Naive thymus-derived CD4-positive, alpha-beta T cell (primary cell): ENCODE measurements at regions of chr14 and their contacts with region 1.

Region 1: DNA sequence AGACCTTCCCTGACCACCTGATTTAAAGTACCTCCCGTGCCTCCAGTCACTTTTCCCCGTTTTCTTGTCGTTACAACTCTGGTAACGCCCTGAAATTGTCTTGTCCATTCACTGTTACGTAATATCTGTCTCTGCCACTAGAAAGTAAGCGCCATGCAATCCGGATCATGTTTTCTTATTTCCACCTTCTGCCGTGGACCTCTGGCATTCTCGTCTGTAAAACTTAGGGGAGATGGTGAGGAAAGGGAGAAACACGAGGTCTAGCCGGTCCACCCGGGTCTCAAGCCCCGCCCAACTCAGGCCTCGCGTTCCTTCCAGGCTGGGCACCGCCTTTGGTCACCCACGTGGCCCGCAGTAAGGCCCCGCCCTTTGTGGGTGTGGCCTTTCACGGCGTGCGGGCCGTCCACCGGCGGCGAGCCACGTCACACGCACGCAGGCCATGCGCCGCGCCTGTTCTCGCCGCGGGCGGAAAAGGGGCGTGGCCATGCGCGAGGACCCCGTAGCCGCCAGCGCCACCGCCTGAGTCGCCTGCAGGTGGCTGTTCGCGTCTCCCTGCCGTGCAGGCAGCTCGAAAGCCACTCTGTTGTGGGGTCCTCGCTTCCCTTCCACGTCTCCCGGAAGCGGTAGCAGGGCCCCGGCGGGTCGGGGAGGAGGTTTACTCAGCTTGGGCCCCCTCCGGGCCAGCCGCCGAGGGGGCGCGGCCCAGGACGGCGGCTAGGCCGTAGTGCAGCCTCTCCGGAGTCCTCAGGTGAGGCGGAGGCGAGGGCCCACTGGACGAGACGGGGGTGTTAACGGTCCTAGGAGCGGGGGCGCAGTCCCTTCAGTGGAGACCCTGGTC is at the start of gene GOLGA5:
- DNase-seq: peak; percentile 97 to 100 (median 99)
- ATAC-seq: peak; percentile 97
- H3K4me3 ChIP-seq: peak within 1 kb of the TSS; percentile 98
- H3K4me3 Mint-ChIP-seq: peak within 1 kb of the TSS; percentile 78 to 96 (median 92)
- H3K27ac ChIP-seq: peak within 1 kb of the TSS; percentile 91
- H3K27ac Mint-ChIP-seq: peak within 1 kb of the TSS; percentile 78 to 98 (median 95)
- H3K4me1 ChIP-seq: peaks cover 15 to 20% of the 10 kb centered on the region in 2 donors
- H3K4me1 Mint-ChIP-seq: peaks cover 24 to 45% (median 39%) of the 10 kb centered on the region in 7 donors
- H3K27me3 ChIP-seq: no peaks in the 10 kb centered on the region
- H3K27me3 Mint-ChIP-seq: peaks cover 0 to 9% (median 0%) of the 10 kb centered on the region in 5 donors
- total RNA-seq, gene GOLGA5: 9.7 to 25.8 (median 23.5) TPM

Region 2: DNA sequence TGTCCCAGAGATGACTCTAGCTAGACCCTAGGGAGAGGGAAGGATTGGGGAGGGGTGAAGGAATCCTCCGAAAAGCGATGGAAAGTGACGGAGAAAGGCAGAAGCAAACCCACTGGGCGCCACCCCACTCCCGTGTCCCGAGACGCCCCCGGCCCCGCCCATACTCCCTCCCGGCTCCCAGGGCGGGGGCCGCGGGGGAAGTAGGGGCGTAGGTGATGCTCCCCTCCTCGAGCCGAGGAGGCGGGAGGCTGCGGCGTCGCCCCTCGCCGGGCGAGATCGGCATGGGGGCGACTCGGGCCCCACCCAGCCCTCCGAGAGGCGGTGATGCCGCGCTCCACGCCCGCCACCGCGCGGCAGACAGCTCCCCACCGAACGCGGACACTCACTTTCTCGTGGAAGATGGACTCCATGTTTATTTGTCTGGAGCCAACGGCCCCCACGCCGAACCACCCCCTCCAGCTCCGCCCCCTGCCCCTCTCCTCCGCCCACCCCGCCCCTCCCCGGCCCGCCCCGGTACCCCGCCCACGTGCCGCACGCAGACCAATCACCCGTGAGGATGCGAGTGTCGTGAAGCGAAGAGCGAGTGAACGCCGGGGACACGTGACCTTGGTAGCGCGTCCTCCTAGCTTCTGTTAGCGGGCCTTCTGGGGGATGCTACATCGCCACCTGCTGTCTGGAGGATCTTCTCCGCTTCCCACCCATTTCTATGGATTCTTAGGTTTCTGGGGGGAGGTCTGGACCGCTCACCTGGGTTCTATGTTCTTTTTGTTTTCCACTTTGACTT is 687.6 kb before region 1 on chr14 and contains the start of gene ATXN3:
- CTCF ChIA-PET with region 1: no interaction called
- POLR2A ChIA-PET with region 1: no interaction called
- intact Hi-C with region 1: loop called (anchors 1 kb)
- DNase-seq: peak; percentile 75 to 97 (median 93)
- ATAC-seq: peak; percentile 95
- H3K4me3 ChIP-seq: peak within 1 kb of the TSS; percentile 82
- H3K4me3 Mint-ChIP-seq: peak within 1 kb of the TSS; percentile 88 to 100 (median 98)
- H3K27ac ChIP-seq: peak within 1 kb of the TSS; percentile 91
- H3K27ac Mint-ChIP-seq: peak within 1 kb of the TSS; percentile 82 to 96 (median 92)
- H3K4me1 ChIP-seq: peaks cover 5 to 17% of the 10 kb centered on the region in 2 donors
- H3K4me1 Mint-ChIP-seq: peaks cover 39 to 72% (median 61%) of the 10 kb centered on the region in 7 donors
- H3K27me3 ChIP-seq: no peaks in the 10 kb centered on the region
- H3K27me3 Mint-ChIP-seq: no peaks in the 10 kb centered on the region
- total RNA-seq, gene ATXN3: 27.8 to 54.9 (median 36.9) TPM

Region 3: GRCh38 chr14:92121670-92122350 is 672.1 kb before region 1 on chr14 and contains the starts of genes CPSF2 and NDUFB1:
- CTCF ChIA-PET with region 1: interaction called, 3 read pairs
- POLR2A ChIA-PET with region 1: interaction called, 9 read pairs
- intact Hi-C with region 1: loop called (anchors 5 kb)
- DNase-seq: peak; percentile 74 to 87 (median 85)
- ATAC-seq: peak; percentile 92
- H3K4me3 ChIP-seq: peak within 1 kb of the TSS; percentile 78
- H3K4me3 Mint-ChIP-seq: peak within 1 kb of the TSS; percentile 88 to 100 (median 99)
- H3K27ac ChIP-seq: peak within 1 kb of the TSS; percentile 92
- H3K27ac Mint-ChIP-seq: peak within 1 kb of the TSS; percentile 96 to 100 (median 100)
- H3K4me1 ChIP-seq: peaks cover 17 to 19% of the 10 kb centered on the region in 2 donors
- H3K4me1 Mint-ChIP-seq: peaks cover 27 to 72% (median 53%) of the 10 kb centered on the region in 7 donors
- H3K27me3 ChIP-seq: no peaks in the 10 kb centered on the region
- H3K27me3 Mint-ChIP-seq: no peaks in the 10 kb centered on the region
- total RNA-seq, gene CPSF2: 30.2 to 77.4 (median 60.4) TPM
- total RNA-seq, gene NDUFB1: 55.1 to 107 (median 89.7) TPM

Region 4: DNA sequence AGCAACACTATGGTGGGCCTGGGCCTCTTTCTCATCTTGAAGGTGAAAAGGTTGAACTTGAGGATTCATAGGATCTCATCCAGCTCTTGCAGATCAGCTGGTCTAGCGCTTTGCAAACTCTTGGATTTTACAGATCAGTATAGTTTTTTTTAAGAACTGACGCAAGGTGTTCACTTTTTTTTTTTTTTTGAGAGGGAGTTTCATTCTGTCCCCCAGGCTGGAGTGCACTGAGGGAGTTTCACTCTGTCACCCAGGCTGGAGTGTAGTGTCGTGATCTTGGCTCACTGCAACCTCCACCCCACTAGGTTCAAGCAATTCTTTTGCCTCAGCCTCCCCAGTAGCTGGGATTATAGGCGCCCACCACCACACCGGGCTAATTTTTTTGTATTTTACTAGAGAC is 25.1 kb before region 1 on chr14:
- CTCF ChIA-PET with region 1: no interaction called
- POLR2A ChIA-PET with region 1: no interaction called
- intact Hi-C with region 1: no loop called
- DNase-seq: no peak
- ATAC-seq: no peak
- H3K4me3 ChIP-seq: no peak overlapping the region
- H3K4me3 Mint-ChIP-seq: peak overlapping the region in 1 of 10 donors; percentile 32
- H3K27ac ChIP-seq: no peak overlapping the region
- H3K27ac Mint-ChIP-seq: peak overlapping the region in 1 of 9 donors; percentile 69
- H3K4me1 ChIP-seq: no peaks in the 10 kb centered on the region
- H3K4me1 Mint-ChIP-seq: peaks cover 0 to 25% (median 0%) of the 10 kb centered on the region in 7 donors
- H3K27me3 ChIP-seq: no peaks in the 10 kb centered on the region
- H3K27me3 Mint-ChIP-seq: peaks cover 0 to 44% (median 0%) of the 10 kb centered on the region in 5 donors

Region 5: DNA sequence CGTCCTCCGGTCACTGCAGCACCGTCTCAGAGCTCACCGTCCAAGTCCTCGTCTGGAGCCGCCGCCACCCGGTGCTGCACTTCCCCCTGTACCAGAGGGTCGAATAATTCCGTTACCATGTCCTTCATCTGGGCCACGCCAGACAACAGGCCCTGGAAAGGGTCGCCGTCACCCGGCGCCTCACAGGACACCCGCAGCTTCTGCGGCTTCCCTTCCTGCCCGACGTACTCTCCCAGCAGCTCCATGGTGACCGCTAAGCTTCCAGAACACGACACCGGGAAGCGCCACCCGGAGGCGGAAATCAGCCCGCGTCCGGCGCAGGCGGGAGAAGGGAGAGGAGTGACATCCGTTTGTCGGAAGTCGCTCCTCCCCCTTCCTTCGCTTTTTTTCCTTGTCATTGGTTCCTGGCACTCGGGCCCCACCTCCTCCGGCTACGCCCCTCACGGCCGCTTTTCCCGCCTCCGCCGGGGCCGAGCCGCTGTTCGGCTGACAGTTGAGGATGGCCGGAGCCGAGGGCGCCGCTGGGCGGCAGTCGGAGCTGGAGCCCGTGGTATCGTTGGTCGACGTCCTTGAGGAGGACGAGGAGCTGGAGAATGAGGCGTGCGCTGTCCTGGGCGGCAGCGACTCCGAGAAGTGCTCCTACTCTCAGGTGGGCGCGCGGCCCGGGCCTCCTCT is 413.0 kb after region 1 on chr14 and contains the starts of genes GON7 and UBR7:
- CTCF ChIA-PET with region 1: no interaction called
- POLR2A ChIA-PET with region 1: no interaction called
- intact Hi-C with region 1: loop called in 1 of 2 experiments (anchors 1 kb)
- DNase-seq: peak; percentile 66 to 91 (median 83)
- ATAC-seq: peak; percentile 99
- H3K4me3 ChIP-seq: peak within 1 kb of the TSS; percentile 81
- H3K4me3 Mint-ChIP-seq: peak within 1 kb of the TSS; percentile 75 to 99 (median 94)
- H3K27ac ChIP-seq: peak within 1 kb of the TSS; percentile 87
- H3K27ac Mint-ChIP-seq: peak within 1 kb of the TSS; percentile 88 to 97 (median 93)
- H3K4me1 ChIP-seq: peaks cover 13 to 22% of the 10 kb centered on the region in 2 donors
- H3K4me1 Mint-ChIP-seq: peaks cover 22 to 65% (median 50%) of the 10 kb centered on the region in 7 donors
- H3K27me3 ChIP-seq: no peaks in the 10 kb centered on the region
- H3K27me3 Mint-ChIP-seq: no peaks in the 10 kb centered on the region
- total RNA-seq, gene GON7: 3.5 to 17.4 (median 8.3) TPM
- total RNA-seq, gene UBR7: 10.1 to 31.3 (median 13.5) TPM

Region 6: DNA sequence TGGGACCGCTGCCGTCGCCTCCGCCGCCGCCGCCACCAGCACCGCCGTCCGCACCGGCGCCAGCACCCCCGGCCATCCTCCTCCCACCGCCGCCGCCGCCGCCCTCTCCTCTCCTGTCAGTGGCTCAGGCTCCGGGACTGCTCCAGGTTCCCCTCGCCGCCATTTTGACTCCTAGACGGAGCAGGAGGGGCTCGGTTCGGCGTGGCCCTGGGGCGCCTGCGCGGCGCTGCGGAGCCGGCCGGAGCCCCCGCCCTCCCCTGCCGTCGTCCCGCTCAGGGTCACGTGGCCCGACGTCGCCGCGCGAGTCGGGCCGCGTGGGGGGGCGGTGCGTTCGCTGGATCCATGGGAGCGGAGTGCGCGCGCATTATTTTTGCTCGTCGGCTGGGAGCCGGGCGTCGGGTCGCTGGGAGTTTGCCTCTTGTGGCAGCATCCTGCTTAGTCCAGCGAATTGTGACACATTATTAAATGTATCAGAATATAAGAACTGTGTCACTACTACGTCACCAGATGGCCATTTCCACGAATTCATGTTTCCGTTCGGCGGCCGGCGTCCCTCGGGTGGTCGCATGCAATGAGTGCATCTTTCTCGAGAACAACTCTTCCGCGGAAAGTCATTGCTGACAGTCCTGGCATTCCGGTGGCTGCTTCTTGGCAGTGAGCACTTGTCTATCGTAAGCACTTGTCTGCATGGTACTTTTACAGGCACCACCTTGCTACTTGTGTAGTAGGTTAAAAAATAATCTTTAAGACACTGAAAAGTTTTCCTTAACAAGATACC is 539.1 kb after region 1 on chr14 and contains the start of gene BTBD7:
- CTCF ChIA-PET with region 1: no interaction called
- POLR2A ChIA-PET with region 1: no interaction called
- intact Hi-C with region 1: loop called (anchors 2 to 5 kb)
- DNase-seq: peak; percentile 91 to 95 (median 93)
- ATAC-seq: peak; percentile 96
- H3K4me3 ChIP-seq: peak within 1 kb of the TSS; percentile 86
- H3K4me3 Mint-ChIP-seq: peak within 1 kb of the TSS; percentile 90 to 96 (median 92)
- H3K27ac ChIP-seq: peak within 1 kb of the TSS; percentile 90
- H3K27ac Mint-ChIP-seq: peak within 1 kb of the TSS; percentile 87 to 98 (median 93)
- H3K4me1 ChIP-seq: peaks cover 19 to 21% of the 10 kb centered on the region in 2 donors
- H3K4me1 Mint-ChIP-seq: peaks cover 34 to 64% (median 54%) of the 10 kb centered on the region in 7 donors
- H3K27me3 ChIP-seq: no peaks in the 10 kb centered on the region
- H3K27me3 Mint-ChIP-seq: no peaks in the 10 kb centered on the region
- total RNA-seq, gene BTBD7: 18.5 to 31.7 (median 27.5) TPM